H1 (cell line): ENCODE measurements at regions of chr15 and their contacts with region 1.

Region 1: DNA sequence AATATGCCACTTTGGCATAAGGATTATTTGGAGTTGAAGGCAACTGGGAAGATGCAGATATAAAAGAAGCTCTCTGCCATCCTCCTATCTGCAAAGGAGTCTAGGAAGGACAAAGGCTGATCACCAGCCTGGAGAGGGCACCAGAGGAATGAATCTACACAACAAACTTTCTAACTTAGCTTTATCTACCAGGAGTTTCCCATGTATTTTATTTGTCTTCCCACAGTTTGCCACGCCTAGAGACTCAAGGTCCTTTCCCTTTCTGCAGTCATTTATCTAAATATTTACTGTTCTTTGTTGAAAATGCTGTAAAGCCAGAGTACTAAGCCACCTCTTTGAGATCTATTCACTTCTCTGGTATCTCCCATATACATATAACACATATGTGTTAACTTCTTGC is 32.2 kb downstream of the GPR176 start:
- DNase-seq: no peak
- H3K4me3 ChIP-seq: peak overlapping the region in 1 of 4 experiments; percentile 36; a peak in 1 of 8 replicates
- H3K27ac ChIP-seq: peak overlapping the region; percentile 97
- H3K4me1 ChIP-seq: peaks cover 5 to 50% (median 46%) of the 10 kb centered on the region in 4 experiments
- H3K27me3 ChIP-seq: no peaks in the 10 kb centered on the region
- CTCF ChIP-seq: peak in 2 of 3 experiments; percentile 8 to 39; a peak in 2 of 4 replicates
- EP300 ChIP-seq: no peak
- POLR2A ChIP-seq: peak in 1 of 2 experiments; percentile 87; a peak in 2 of 3 replicates
- RAD21 ChIP-seq: peak; percentile 29 to 43

Region 2: GRCh38 chr15:39868396-39868795 is 19.4 kb before region 1 on chr15:
- CTCF ChIA-PET with region 1: interaction called, 6 read pairs
- POLR2A ChIA-PET with region 1: interaction called, 11 read pairs
- DNase-seq: no peak
- H3K4me3 ChIP-seq: no peak overlapping the region
- H3K27ac ChIP-seq: no peak overlapping the region
- H3K4me1 ChIP-seq: peaks cover 0 to 9% (median 3%) of the 10 kb centered on the region in 4 experiments; a peak in 6 of 7 replicates
- H3K27me3 ChIP-seq: no peaks in the 10 kb centered on the region
- CTCF ChIP-seq: no peak
- EP300 ChIP-seq: no peak
- POLR2A ChIP-seq: no peak
- RAD21 ChIP-seq: no peak

Region 3: DNA sequence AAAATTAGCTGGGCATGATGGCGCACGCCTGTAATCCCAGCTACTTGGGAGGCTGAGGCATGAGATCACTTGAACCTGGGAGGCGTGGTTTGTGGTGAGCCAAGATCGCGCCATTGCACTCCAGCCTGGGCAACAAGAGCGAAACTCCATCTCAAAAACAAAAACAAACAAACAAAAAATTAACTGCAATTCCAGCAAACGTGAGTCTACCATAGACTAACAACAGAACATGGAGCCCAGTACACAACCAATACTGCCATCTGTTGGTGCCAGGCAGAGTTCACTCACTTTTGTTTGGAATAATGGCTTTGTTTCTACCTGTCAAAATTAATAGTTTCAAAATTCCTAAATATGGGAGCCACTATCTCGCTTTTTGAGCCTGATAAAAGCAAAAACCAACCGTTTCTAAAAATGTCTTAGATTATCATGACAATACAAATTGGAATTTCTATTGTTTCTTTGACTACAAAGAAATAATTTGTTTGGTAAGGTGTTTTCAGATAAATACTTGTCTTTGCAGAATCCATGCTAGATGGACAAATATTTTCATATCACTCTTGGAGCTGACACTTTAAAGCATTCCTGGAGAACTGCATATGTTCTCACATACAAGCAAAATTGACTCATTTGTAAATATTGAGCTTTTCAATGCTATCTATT is 12.8 kb before region 1 on chr15:
- CTCF ChIA-PET with region 1: interaction called, 6 read pairs
- POLR2A ChIA-PET with region 1: interaction called, 14 read pairs
- DNase-seq: no peak
- H3K4me3 ChIP-seq: no peak overlapping the region
- H3K27ac ChIP-seq: no peak overlapping the region
- H3K4me1 ChIP-seq: peaks cover 0 to 9% (median 2%) of the 10 kb centered on the region in 4 experiments; a peak in 5 of 7 replicates
- H3K27me3 ChIP-seq: no peaks in the 10 kb centered on the region
- CTCF ChIP-seq: peak in 2 of 3 experiments; percentile 45 to 56; a peak in 2 of 4 replicates
- EP300 ChIP-seq: no peak
- POLR2A ChIP-seq: no peak
- RAD21 ChIP-seq: peak; percentile 61 to 70

Region 4: DNA sequence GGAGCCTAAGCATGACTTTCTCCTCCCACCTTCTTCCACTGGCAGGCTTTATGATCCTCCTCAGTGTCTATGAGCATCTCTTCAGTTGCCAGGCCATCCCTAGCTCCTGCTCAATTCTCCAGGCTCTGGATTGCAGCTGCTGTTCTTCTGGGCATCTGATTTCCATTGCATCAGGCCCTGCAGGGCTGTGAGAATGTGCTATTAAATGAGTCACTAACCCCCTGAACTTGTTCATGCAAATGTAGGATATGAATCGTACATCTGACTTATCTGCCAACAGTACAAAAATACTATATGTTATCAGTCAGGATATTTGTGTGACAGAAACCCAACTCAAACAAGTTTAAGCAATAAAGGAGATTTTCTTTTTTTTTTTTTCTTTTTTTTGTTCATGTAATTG is 20.4 kb after region 1 on chr15:
- CTCF ChIA-PET with region 1: interaction called, 7 read pairs
- POLR2A ChIA-PET with region 1: interaction called, 10 read pairs
- DNase-seq: no peak
- H3K4me3 ChIP-seq: no peak overlapping the region
- H3K27ac ChIP-seq: no peak overlapping the region
- H3K4me1 ChIP-seq: peaks cover 17 to 42% (median 40%) of the 10 kb centered on the region in 4 experiments
- H3K27me3 ChIP-seq: no peaks in the 10 kb centered on the region
- CTCF ChIP-seq: no peak
- EP300 ChIP-seq: no peak
- POLR2A ChIP-seq: no peak; a peak in 1 of 3 replicates
- RAD21 ChIP-seq: no peak

Region 5: DNA sequence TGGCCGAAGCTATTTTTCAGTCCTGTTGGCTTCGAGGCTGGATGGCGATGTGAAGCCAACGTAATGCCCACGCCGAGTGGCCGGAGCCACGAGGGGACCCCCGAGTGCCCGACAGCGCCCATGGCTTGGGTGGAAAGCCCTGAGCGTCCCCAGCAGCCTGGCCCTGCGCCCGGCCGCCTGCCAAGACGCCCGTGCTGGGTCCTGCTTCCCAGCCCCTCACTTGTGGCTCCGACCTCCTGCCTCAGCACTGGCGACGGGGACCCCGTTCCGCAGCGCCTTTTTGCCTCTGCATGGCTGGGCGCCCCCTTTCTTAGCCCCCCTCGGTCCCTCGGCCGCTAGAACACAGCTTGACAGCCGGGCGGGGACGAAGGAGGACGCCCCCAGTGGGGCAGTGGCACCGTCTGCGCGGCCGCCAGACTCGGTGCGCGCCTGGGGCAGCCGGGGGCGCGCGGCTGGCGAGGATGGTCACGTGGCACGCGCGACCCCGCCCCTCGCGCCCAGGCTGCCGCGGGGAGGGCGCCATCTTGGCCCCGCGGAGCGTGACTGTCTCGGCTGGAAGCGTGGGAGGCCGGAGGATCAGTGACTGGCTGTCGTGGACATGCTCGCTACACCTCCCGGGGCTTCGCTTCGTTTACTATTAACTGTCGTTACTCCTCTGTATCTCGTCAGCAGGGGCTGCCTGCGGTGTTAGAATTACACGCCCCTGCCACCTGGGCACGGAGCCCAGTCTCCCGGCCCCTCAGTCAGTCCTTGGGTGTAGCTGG is 32.9 kb after region 1 on chr15:
- CTCF ChIA-PET with region 1: interaction called, 7 read pairs
- POLR2A ChIA-PET with region 1: interaction called, 23 read pairs
- DNase-seq: peak in 1 of 2 experiments; percentile 86
- H3K4me3 ChIP-seq: peak overlapping the region; percentile 91 to 95 (median 94)
- H3K27ac ChIP-seq: peak overlapping the region; percentile 69
- H3K4me1 ChIP-seq: peaks cover 5 to 15% (median 8%) of the 10 kb centered on the region in 4 experiments; a peak in 6 of 7 replicates
- H3K27me3 ChIP-seq: no peaks in the 10 kb centered on the region
- CTCF ChIP-seq: peak in 2 of 3 experiments; percentile 23 to 29; a peak in 3 of 4 replicates
- EP300 ChIP-seq: no peak
- POLR2A ChIP-seq: peak; percentile 61 to 64
- RAD21 ChIP-seq: no peak; a peak in 1 of 4 replicates

Region 6: GRCh38 chr15:39934397-39935071 is 46.7 kb after region 1 on chr15:
- CTCF ChIA-PET with region 1: interaction called, 7 read pairs
- POLR2A ChIA-PET with region 1: interaction called, 21 read pairs
- DNase-seq: no peak
- H3K4me3 ChIP-seq: peak overlapping the region; percentile 62 to 91 (median 76)
- H3K27ac ChIP-seq: peak overlapping the region; percentile 70; the same call in 1 of the 2 replicates
- H3K4me1 ChIP-seq: peaks cover 0 to 8% (median 2%) of the 10 kb centered on the region in 4 experiments; a peak in 4 of 7 replicates
- H3K27me3 ChIP-seq: no peaks in the 10 kb centered on the region
- CTCF ChIP-seq: no peak
- EP300 ChIP-seq: no peak
- POLR2A ChIP-seq: peak in 1 of 2 experiments; percentile 59; a peak in 2 of 3 replicates
- RAD21 ChIP-seq: no peak